ENCODE measurements at regions of chr3 and their contacts with region 1.

Region 1: DNA sequence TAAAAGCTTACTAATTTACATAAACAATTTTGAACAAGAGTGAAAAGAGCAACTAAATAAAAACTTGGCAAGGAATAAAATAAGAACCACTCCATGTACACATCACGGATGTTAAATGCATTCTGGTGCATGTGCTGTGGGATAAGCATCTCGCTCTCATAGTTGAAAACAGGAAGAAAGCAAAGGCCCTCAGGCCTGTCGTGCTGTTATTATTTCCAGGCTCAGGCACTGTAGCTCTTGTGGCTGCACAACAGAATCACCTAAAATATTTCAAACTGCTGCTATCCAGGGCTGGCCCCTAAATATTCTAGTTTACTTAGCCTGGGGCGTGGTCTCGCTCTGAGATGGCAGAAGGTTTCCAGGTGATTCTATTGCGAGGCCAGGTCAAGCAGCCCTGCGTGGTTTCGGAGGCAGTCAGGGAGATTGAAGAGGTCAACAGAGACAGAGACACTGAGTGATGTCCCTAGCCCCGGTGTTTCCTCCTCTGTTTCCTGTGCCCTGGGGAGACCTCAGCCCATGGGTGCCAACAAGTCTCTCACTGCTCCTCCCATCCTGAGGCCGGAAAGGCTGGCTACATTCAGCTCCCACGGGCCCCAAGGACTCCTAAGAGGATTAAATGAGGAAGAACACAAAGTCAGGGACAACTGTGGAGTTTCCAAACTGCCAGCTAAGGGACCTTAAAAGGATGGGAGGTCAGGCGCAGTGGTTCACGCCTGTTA is 18.1 kb upstream of the PDIA5 start:
- DNase-seq: no peak
- ATAC-seq: no peak
- H3K4me3 ChIP-seq: no peak overlapping the region
- H3K27ac ChIP-seq: no peak overlapping the region
- H3K4me1 ChIP-seq: no peaks in the 10 kb centered on the region
- H3K27me3 ChIP-seq: no peaks in the 10 kb centered on the region; the same call in 1 of the 2 replicates
- CTCF ChIP-seq: no peak

Region 2: DNA sequence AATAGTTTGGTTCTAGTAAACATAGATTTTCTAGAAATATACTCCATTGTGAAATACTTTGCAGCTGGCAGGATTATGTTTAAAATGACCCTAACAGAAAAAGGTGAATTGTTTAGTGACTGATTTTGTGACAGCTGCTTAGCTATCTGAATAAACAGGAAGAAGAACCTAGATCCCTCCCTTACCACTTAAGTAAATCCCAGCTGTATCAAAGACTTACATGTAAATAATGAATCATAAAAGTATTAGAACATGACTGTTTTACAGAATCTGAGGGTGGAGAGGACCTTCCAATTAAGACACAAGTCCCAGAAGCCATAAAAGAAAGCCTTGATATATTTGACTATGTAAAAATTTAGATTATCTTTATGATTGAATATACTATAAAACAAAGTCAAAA is 237.9 kb before region 1 on chr3:
- CTCF ChIA-PET with region 1: no interaction called
- POLR2A ChIA-PET with region 1: no interaction called
- in situ Hi-C with region 1: no loop called
- intact Hi-C with region 1: no loop called
- DNase-seq: no peak
- ATAC-seq: no peak
- H3K4me3 ChIP-seq: no peak overlapping the region
- H3K27ac ChIP-seq: no peak overlapping the region
- H3K4me1 ChIP-seq: no peaks in the 10 kb centered on the region
- H3K27me3 ChIP-seq: no peaks in the 10 kb centered on the region
- CTCF ChIP-seq: no peak

Region 3: GRCh38 chr3:122998206-122998858 is 50.3 kb before region 1 on chr3:
- CTCF ChIA-PET with region 1: no interaction called
- POLR2A ChIA-PET with region 1: interaction called, 10 read pairs
- in situ Hi-C with region 1: no loop called
- intact Hi-C with region 1: no loop called
- DNase-seq: no peak
- ATAC-seq: no peak
- H3K4me3 ChIP-seq: no peak overlapping the region
- H3K27ac ChIP-seq: no peak overlapping the region
- H3K4me1 ChIP-seq: no peaks in the 10 kb centered on the region
- H3K27me3 ChIP-seq: peaks cover 11% of the 10 kb centered on the region
- CTCF ChIP-seq: no peak

Region 4: GRCh38 chr3:123066896-123067688 is 18.4 kb after region 1 on chr3 and contains the start of gene PDIA5:
- CTCF ChIA-PET with region 1: interaction called, 13 read pairs
- POLR2A ChIA-PET with region 1: interaction called, 5 read pairs
- in situ Hi-C with region 1: no loop called
- intact Hi-C with region 1: no loop called
- DNase-seq: peak; percentile 46
- ATAC-seq: peak; percentile 96
- H3K4me3 ChIP-seq: peak within 1 kb of the TSS; percentile 84 to 92
- H3K27ac ChIP-seq: peak within 1 kb of the TSS; percentile 83
- H3K4me1 ChIP-seq: peaks cover 32% of the 10 kb centered on the region
- H3K27me3 ChIP-seq: no peaks in the 10 kb centered on the region
- CTCF ChIP-seq: no peak
- total RNA-seq, gene PDIA5: 53.6 TPM